Right lobe of liver (tissue), 6 donors: ENCODE measurements at regions of chr6 and their contacts with region 1.

Region 1: DNA sequence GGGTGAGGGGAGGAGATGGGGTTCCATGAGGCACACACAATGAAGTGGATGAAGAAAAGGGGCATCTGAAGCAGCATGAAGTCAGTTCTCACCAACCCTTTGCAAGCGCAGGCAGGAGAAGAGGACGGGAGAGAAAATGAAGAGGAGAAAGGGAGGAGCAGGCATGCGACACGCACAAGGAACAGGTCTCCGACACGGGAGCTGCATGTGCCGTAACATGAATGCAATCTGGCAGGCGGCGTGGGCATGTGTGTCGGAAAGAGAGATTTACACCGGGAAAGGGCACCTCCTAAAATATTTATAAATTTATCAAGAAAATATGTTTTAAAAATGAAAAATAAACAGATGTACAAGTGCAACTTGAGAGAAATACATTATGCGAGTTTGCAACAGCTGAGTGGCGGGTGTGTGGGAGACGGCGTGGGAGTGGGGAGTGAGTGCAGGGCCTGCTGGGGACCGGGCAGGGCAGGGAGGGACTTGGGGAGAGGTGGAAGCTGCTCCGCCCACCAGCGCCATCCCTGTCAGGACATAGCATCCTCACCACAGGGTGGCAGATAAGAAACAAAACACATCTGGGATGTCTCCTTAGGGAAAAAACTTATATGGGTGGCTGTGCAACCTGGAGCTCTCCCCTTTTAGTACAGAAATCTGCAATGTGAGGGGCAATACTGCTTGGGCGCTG is 40.6 kb downstream of the GJA10 start:
- DNase-seq: no peak
- ATAC-seq: no peak
- H3K4me3 ChIP-seq: no peak overlapping the region
- H3K27ac ChIP-seq: no peak overlapping the region
- H3K4me1 ChIP-seq: no peaks in the 10 kb centered on the region
- H3K27me3 ChIP-seq: no peaks in the 10 kb centered on the region
- CTCF ChIP-seq: no peak
- POLR2A ChIP-seq: no peak

Region 2: DNA sequence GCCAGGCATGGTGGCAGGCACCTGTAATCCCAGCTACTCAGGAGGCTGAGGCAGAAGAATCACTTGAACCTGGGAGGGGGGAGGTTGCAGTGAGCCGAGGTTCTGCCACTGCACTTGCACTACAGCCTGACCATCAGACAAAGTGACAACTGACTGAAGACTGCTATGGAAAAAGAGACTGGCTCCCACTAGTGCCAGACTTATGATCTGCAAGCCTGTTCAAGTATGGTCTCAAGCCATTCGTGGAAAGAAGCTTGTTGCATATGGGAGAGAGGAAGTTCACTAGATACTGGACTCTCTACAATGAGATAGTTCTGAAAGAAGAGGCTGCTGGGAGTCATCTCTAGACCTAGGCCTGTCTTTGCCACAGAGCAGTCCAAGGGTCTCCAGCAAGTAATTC is 142.0 kb before region 1 on chr6:
- intact Hi-C with region 1: no loop called
- DNase-seq: peak in 1 of 3 donors; percentile 54
- ATAC-seq: peak; percentile 97 to 99 (median 98)
- H3K4me3 ChIP-seq: no peak overlapping the region
- H3K27ac ChIP-seq: no peak overlapping the region
- H3K4me1 ChIP-seq: peaks cover 0 to 6% (median 0%) of the 10 kb centered on the region in 4 donors
- H3K27me3 ChIP-seq: no peaks in the 10 kb centered on the region
- CTCF ChIP-seq: peak; percentile 62 to 70 (median 68)
- POLR2A ChIP-seq: no peak

Region 3: GRCh38 chr6:89984926-89985750 is 50.3 kb after region 1 on chr6:
- intact Hi-C with region 1: no loop called
- DNase-seq: peak; percentile 44 to 55 (median 54)
- ATAC-seq: peak; percentile 53 to 84 (median 69)
- H3K4me3 ChIP-seq: no peak overlapping the region
- H3K27ac ChIP-seq: no peak overlapping the region
- H3K4me1 ChIP-seq: no peaks in the 10 kb centered on the region
- H3K27me3 ChIP-seq: no peaks in the 10 kb centered on the region
- CTCF ChIP-seq: no peak
- POLR2A ChIP-seq: no peak

Region 4: DNA sequence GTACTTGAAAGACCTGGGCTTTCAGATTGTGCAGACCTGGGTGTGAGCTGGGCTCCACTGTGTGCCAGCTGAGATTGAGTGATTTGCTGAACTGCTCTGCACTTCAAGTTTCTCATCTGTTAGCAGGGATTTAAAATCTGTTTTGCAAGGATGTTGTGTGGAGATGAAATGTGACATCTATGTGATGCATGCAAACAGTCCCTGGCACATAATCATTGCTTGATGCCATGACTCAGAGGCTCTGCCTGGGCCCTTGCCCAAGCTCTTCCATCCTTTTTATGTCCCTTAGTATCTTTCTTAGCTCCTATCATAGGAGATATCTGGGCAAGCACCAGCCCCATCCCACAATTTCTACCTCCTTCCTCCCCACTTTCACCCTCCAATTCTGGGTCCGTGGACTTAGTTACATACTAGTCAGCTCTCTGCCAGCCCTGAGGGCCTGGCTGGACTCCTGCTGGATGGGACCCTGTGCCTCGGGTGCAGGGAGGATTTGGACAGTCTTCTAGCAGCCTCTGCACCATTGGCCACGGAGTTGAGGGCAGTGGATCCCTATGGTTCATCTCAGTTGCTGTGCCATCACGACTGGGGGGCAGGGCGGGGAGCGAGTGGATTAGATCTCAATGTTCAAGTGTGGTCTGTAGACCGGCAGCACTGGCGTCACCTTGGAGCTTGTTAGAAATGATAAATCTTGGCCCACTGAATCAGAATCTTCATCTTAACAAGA is 548.5 kb after region 1 on chr6:
- intact Hi-C with region 1: loop called in 1 of 2 experiments (anchors 10 kb)
- DNase-seq: no peak
- ATAC-seq: no peak
- H3K4me3 ChIP-seq: no peak overlapping the region
- H3K27ac ChIP-seq: no peak overlapping the region
- H3K4me1 ChIP-seq: peaks cover 0 to 4% (median 0%) of the 10 kb centered on the region in 4 donors
- H3K27me3 ChIP-seq: no peaks in the 10 kb centered on the region
- CTCF ChIP-seq: no peak
- POLR2A ChIP-seq: no peak

Region 5: GRCh38 chr6:90631046-90631445 is 696.2 kb after region 1 on chr6:
- intact Hi-C with region 1: no loop called
- DNase-seq: no peak
- ATAC-seq: no peak
- H3K4me3 ChIP-seq: no peak overlapping the region
- H3K27ac ChIP-seq: no peak overlapping the region
- H3K4me1 ChIP-seq: no peaks in the 10 kb centered on the region
- H3K27me3 ChIP-seq: no peaks in the 10 kb centered on the region
- CTCF ChIP-seq: no peak
- POLR2A ChIP-seq: no peak